MCF 10A (cell line): ENCODE measurements at regions of chr17 and their contacts with region 1.

Region 1: DNA sequence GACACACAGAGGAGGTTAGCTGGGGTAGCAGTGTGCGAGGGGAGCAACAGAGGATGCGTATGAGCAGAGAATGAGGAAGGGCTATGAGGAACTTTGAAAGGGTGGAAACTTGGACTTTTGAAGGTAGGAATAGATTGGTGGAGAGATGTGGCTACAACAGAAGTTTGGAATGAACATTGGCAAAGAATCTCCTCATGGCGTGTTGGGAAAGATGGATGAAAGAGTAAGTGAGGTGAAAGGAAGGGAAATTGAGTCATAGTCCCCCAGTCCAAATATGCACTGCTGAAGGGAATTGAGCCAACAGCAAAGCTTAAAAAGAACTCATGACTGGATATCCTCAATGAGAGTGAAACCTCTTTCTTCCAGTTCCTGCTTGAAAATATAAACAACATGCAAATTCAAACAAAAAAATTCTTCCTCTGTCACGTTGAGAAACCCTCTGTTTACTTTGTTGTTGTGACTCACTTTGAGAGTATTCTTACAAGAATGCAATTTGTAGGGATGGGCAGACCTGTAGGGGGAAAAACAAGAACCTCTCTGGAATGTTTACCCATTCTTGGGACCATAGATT is 313.2 kb upstream of the KCNJ16 start:
- DNase-seq: peak; percentile 93
- H3K4me3 Mint-ChIP-seq: peak overlapping the region; percentile 15
- H3K27ac Mint-ChIP-seq: peak overlapping the region; percentile 91
- H3K4me1 Mint-ChIP-seq: peaks cover 58% of the 10 kb centered on the region
- H3K27me3 Mint-ChIP-seq: no peaks in the 10 kb centered on the region
- CTCF ChIP-seq: no peak

Region 2: GRCh38 chr17:69733171-69734012 is 28.4 kb before region 1 on chr17:
- CTCF ChIA-PET with region 1: interaction called, 4 read pairs
- POLR2A ChIA-PET with region 1: interaction called, 38 read pairs
- intact Hi-C with region 1: no loop called
- DNase-seq: peak; percentile 93
- H3K4me3 Mint-ChIP-seq: peak overlapping the region; percentile 37
- H3K27ac Mint-ChIP-seq: peak overlapping the region; percentile 90
- H3K4me1 Mint-ChIP-seq: peaks cover 36% of the 10 kb centered on the region
- H3K27me3 Mint-ChIP-seq: no peaks in the 10 kb centered on the region
- CTCF ChIP-seq: no peak

Region 3: GRCh38 chr17:69812240-69812837 is 50.5 kb after region 1 on chr17:
- CTCF ChIA-PET with region 1: no interaction called
- POLR2A ChIA-PET with region 1: interaction called, 4 read pairs
- intact Hi-C with region 1: loop called (anchors 2 kb)
- DNase-seq: peak; percentile 85
- H3K4me3 Mint-ChIP-seq: no peak overlapping the region
- H3K27ac Mint-ChIP-seq: peak overlapping the region; percentile 74
- H3K4me1 Mint-ChIP-seq: peaks cover 41% of the 10 kb centered on the region
- H3K27me3 Mint-ChIP-seq: no peaks in the 10 kb centered on the region
- CTCF ChIP-seq: no peak

Region 4: DNA sequence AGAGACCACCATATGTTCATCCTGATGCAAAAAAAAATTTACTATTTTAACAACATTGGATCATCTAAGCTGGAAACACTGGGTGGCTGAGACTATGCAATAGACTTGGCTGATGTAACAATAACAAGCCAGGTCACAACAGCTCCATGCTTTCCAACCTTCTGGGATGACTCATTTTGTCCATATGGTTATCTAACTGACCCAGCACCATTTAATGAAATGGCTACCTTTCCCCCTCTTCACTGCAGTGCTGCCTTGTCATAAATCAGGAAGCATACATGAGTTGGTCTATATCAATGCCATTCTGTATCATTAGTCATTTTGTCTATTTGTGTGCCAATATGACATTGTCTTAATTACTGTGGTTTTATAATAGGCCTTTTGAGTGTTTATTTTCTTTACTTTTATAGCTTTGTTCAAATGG is 95.6 kb after region 1 on chr17:
- CTCF ChIA-PET with region 1: no interaction called
- POLR2A ChIA-PET with region 1: no interaction called
- intact Hi-C with region 1: loop called (anchors 5 kb)
- DNase-seq: peak; percentile 85
- H3K4me3 Mint-ChIP-seq: no peak overlapping the region
- H3K27ac Mint-ChIP-seq: peak overlapping the region; percentile 85
- H3K4me1 Mint-ChIP-seq: peaks cover 13% of the 10 kb centered on the region
- H3K27me3 Mint-ChIP-seq: no peaks in the 10 kb centered on the region
- CTCF ChIP-seq: no peak